ENCODE measurements at regions of chr10 and their contacts with region 1.

Region 1: DNA sequence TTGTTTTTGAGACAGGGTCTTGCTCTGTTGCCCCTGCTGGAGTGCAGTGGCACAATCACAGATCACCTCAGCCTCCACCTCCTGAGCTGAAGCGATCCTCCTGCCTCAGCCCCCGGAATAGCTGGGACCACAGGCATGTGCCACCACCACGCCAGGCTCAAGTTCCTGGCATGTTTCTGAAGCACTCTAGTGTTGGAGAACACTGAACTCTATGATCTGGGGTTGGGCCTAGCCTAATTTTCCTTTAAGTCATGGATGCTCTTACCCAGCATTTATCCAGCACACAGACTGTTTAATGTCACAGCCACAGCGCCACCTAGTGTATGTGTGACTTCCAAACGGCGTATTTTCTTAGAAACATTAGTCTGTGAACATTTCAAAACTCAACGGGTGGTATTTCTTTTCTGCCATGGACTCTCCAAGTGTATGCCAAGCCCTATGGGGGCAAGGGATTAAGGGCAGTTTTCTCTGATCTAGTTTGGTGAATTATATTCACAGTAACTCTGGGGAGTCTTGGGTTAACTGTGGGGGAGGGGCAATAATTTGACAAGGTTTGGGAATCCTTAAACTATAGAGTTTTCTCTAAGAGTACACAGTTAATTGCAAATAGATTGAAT is 91.8 kb downstream of the CREM start:
- DNase-seq: peak; percentile 77
- ATAC-seq: peak; percentile 62
- H3K4me3 ChIP-seq: no peak overlapping the region
- H3K27ac ChIP-seq: no peak overlapping the region
- H3K4me1 ChIP-seq: peaks cover 61% of the 10 kb centered on the region
- H3K27me3 ChIP-seq: no peaks in the 10 kb centered on the region
- CTCF ChIP-seq: peak; percentile 83
- EP300 ChIP-seq: no peak
- POLR2A ChIP-seq: no peak
- RAD21 ChIP-seq: peak; percentile 45; the same call in 1 of the 2 replicates

Region 2: DNA sequence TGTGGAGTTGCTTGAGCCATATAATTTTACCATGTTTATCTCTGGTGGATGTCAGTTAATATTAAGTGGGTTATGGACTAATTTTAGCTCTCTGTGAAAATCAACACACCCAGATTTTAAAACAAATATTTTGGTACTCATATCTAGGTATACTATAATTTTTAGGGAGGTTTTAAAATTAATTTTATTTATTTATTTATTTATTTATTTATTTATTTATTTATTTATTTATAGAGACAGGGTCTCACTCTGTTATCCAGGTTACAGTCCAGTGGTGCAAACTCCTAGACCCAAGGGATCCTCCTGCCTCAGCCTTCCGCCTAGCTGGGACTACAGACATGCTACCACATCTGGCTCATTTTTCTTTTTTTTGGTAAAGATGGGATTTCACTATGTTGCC is 99.1 kb before region 1 on chr10:
- CTCF ChIA-PET with region 1: interaction called, 22 read pairs
- POLR2A ChIA-PET with region 1: no interaction called
- in situ Hi-C with region 1: loop called (anchors 5 kb)
- intact Hi-C with region 1: loop called (anchors 1 kb)
- DNase-seq: no peak
- ATAC-seq: no peak
- H3K4me3 ChIP-seq: no peak overlapping the region
- H3K27ac ChIP-seq: no peak overlapping the region
- H3K4me1 ChIP-seq: peaks cover 12% of the 10 kb centered on the region
- H3K27me3 ChIP-seq: no peaks in the 10 kb centered on the region
- CTCF ChIP-seq: no peak
- EP300 ChIP-seq: no peak
- POLR2A ChIP-seq: no peak
- RAD21 ChIP-seq: no peak